GM10248 (cell line): ENCODE measurements at regions of chr11 and their contacts with region 1.

Region 1: DNA sequence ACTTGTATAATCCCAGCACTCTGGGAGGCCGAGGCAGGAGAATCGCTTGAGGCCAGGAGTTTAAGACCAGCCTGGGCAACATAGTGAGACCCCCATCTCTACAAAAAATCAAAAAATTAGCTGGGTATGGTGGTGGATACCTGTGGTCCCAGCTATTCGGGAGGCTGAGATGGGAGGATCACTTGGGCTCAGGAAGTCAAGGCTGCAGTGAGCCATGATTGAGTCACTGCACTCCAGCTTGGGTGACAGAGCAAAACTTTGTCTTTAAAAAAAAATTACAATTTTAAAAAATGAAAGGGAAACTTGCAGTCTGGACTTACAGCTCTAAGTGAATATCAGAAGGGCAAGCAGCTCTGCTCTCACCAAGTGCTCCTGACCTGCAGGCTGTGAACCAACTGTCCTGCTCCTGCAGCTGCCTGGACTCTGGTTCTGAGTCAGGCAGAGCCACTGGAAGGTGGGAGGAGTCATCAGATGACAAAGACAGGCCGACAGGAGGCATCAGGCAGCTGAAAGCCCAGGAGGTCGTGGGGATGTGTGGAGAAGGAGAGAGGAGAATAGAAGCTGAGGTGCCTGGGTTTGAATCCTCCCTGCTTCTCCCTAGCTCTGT is 9.6 kb downstream of the SMTNL1 start:
- DNase-seq: peak; percentile 73
- CTCF ChIP-seq: no peak

Region 2: GRCh38 chr11:57180081-57180561 is 366.9 kb before region 1 on chr11:
- CTCF ChIA-PET with region 1: no interaction called
- POLR2A ChIA-PET with region 1: no interaction called
- DNase-seq: no peak
- CTCF ChIP-seq: no peak

Region 3: DNA sequence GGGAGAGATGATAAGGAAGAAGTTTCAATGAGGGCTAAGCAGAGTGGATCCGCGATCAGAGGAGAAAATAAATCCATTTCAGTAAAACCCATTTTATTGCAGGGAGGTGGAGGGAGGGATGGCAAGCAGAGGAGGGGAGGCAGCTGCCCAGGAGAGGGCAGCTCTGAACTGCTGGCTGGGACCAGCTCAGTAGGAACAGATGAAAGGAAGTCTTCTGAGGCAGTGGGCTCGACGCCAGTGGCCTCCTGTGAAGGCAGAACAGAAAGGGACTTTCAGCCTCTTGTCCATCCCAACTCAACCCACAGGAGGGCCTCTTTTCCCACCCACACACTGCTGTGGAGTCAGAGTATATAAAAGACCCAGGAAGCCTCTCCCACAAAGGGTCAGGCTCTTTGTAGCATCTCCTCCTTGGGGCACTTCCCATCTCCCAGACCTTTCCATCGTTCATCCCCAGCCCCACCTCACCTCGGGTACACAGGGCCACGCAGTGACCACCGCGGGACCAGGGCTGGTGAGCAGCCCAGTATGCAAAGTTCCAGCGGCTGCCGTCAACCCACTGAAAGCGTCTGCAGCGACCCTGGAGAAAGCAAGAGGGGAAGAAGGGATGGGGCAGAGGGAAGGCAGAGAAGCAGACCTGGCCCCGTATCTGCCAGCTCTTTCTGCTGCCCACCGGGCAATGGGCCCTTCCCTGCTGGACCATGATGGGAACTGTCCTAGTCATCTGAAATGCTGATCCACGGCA is 159.5 kb before region 1 on chr11:
- CTCF ChIA-PET with region 1: no interaction called
- POLR2A ChIA-PET with region 1: no interaction called
- DNase-seq: no peak
- CTCF ChIP-seq: no peak

Region 4: DNA sequence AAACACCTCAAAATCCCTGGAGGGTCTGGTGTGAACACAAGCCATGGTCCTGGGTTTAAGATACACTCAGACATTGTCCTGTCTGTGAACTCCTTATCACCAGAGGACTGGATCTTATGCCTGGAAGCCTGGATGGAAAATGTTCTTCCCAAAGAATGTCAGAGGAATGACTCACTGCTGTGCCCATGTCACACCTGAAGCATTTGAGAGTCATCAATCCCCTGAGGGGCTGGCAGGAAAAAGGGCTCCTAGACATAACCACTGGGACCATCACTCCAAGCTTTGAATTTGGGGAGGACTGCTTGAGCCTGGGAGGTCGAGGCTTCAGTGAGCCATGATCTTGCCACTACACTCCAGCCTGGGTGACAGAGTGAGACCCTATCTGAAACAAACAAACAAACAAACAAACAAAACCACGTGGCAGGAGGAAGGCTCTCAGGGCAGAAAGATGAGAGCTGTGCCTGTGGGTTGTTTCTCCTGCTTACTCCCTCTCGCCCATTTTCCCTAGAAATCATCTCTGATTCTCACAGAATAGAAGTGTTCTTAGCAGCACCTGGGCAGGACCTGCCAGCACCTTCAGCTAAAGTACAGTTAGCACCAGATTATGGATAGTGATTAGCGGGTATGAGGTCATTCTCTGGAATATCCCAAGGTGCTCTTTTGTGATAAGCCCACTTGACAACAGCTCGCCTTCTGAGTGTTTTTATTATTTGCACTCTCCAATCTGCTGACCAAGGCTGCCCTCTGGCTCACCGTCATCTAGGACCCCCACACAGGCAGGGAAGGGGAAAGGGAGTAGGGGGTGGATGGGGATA is 144.6 kb before region 1 on chr11:
- CTCF ChIA-PET with region 1: no interaction called
- POLR2A ChIA-PET with region 1: no interaction called
- DNase-seq: no peak
- CTCF ChIP-seq: no peak

Region 5: DNA sequence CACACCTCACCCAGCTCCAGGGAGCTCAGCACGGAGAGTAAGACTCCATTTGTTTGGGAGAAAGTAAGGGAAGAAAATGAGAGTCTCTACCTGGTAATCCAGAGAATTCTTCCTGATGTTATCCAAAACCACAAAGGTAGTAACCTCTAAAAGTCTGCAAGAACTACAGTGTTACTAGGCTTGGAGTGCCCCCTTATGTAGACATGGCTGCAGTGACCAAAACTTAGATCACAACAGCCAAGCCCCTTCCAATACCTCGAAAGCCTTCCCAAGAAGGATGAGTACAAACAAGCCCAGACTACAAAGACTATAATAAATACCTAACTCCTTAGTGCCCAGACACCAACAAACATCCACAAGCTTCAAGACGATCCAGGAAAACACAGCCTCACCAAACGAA is 15.6 kb after region 1 on chr11:
- CTCF ChIA-PET with region 1: interaction called, 19 read pairs
- POLR2A ChIA-PET with region 1: interaction called, 4 read pairs
- DNase-seq: no peak
- CTCF ChIP-seq: no peak